ENCODE measurements at regions of chr10 and their contacts with region 1.

Region 1: GRCh38 chr10:6445501-6446316 is 134.4 kb downstream of the PRKCQ start:
- DNase-seq: peak; percentile 13 to 89 (median 69)
- H3K4me3 ChIP-seq: peak overlapping the region in 58 of 59 donors; percentile 7 to 62 (median 36)
- H3K27ac ChIP-seq: peak overlapping the region in 54 of 59 donors; percentile 10 to 93 (median 80)
- H3K27me3 ChIP-seq: no peaks in the 10 kb centered on the region
- CTCF ChIP-seq: peak; percentile 33 to 87 (median 75)

Region 2: DNA sequence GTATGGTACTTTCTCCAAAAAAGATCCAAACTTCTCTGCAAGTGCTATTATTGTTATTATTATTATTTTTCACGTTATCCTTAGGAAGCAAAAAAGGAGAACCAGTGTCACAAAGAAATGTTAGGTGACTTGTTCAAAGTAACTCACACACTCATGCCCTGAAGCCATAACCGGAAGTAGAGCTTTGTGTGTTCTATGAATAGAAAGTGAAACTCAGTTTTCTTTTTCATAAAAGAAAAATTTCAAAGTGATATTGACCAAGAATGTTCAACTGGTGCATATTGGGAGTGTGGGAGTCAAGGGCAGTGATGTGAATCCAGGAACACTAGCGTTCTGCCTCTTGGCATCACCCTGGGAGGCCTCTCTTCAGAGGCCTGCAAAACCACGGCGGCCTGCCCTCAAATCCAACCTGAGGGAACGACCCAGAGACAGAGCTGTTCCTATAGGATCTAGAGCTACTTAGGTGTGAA is 28.2 kb after region 1 on chr10:
- intact Hi-C with region 1: no loop called
- DNase-seq: no peak
- H3K4me3 ChIP-seq: no peak overlapping the region
- H3K27ac ChIP-seq: peak overlapping the region in 1 of 59 donors; percentile 25
- H3K27me3 ChIP-seq: no peaks in the 10 kb centered on the region
- CTCF ChIP-seq: no peak

Region 3: DNA sequence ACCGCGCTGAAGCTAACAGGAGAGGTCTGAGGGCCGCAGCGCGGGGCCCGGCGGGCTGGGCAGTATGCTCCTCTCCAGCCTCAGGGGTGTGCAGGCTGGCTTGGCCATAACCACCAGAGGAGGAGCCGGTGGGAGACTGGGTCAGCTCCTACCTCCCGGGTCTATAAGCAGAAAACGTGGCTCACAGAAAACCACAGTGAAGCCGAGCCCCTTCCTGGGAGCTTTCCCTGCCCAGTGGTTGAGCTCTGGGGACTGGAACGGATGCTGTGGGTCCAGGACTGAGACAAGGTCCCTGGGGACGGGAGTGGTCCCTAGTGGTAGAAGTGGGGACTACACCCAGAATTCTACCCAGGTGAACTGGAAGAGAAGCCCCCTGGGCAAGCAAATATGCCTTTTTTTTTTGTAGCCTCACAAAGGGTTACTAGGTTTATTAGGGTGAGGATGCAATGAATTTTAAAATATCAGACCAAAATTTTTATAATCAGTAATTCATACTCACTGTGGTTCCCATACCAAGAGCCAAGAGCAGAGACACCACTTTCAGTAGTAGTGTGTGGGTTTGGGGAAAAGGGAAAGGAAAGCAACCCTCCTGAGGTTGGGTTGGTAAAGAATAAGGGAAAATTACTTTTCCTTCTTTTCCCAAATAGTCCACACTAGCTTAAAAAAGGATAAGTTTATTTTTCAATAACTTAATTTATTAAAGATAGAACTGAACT is 202.3 kb after region 1 on chr10:
- intact Hi-C with region 1: loop called in 1 of 2 experiments (anchors 5 kb)
- DNase-seq: peak; percentile 7 to 75 (median 58)
- H3K4me3 ChIP-seq: peak overlapping the region in 3 of 59 donors; percentile 13 to 44 (median 33)
- H3K27ac ChIP-seq: peak overlapping the region in 19 of 59 donors; percentile 15 to 71 (median 53)
- H3K27me3 ChIP-seq: peaks cover 0 to 11% (median 0%) of the 10 kb centered on the region in 45 donors
- CTCF ChIP-seq: peak; percentile 35 to 92 (median 77)

Region 4: GRCh38 chr10:6667679-6668270 is 222.1 kb after region 1 on chr10:
- intact Hi-C with region 1: loop called (anchors 2 to 10 kb)
- DNase-seq: peak in 4 of 10 donors; percentile 22 to 51 (median 40)
- H3K4me3 ChIP-seq: no peak overlapping the region
- H3K27ac ChIP-seq: no peak overlapping the region
- H3K27me3 ChIP-seq: peaks cover 0 to 7% (median 0%) of the 10 kb centered on the region in 45 donors
- CTCF ChIP-seq: peak; percentile 42 to 88 (median 71)

Region 5: GRCh38 chr10:6678211-6678803 is 232.6 kb after region 1 on chr10:
- intact Hi-C with region 1: loop called in 1 of 2 experiments (anchors 10 kb)
- DNase-seq: peak in 7 of 10 donors; percentile 8 to 56 (median 40)
- H3K4me3 ChIP-seq: peak overlapping the region in 1 of 59 donors; percentile 10
- H3K27ac ChIP-seq: no peak overlapping the region
- H3K27me3 ChIP-seq: peaks cover 0 to 5% (median 0%) of the 10 kb centered on the region in 45 donors
- CTCF ChIP-seq: peak; percentile 37 to 82 (median 66)

Measured in dorsolateral prefrontal cortex (tissue), 120 donors.